Colonic mucosa (tissue), 4 donors: ENCODE measurements at regions of chr1 and their contacts with region 1.

Region 1: DNA sequence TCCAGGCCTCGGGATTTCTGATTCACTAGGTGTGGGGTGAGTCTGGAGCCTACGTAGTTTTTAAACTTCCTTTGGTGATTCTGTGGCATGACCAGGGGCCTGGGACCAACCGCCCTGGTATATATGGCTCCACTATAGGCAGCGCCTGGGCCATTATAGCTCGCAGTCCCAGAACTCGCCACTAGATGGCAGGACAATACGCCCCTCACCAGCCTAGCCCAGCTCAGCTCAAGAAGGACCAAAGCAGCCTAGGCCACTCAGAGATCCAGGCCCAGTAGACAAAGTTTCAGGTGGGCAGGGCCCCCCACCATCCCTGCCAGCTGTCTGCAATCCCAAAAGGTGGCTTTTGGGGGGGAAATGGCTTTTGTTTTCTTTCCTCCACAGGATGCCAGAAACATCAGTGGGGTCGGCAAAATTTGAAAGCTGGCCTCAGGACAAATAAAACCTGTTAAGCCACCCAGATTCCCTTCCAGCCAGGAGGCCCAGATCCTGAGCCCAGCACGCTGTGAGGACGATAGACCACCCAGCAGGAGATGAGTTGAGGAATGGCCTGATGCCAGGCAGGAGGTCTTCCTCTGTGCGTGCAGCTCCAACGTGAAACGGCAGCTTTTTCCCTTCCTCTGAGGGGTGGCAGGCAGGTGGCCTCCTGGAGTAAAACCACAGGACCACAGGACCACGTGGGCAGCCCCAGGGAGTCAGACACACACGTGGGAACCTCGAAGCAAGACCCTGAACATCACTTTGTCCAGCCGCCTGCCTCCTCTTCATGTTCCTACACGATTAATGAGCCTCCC is 24.8 kb upstream of the TMEM51 start:
- DNase-seq: peak; percentile 80
- H3K4me3 ChIP-seq: no peak overlapping the region
- H3K27ac ChIP-seq: no peak overlapping the region
- H3K4me1 ChIP-seq: no peaks in the 10 kb centered on the region
- H3K27me3 ChIP-seq: no peaks in the 10 kb centered on the region
- CTCF ChIP-seq: peak; percentile 94

Region 2: DNA sequence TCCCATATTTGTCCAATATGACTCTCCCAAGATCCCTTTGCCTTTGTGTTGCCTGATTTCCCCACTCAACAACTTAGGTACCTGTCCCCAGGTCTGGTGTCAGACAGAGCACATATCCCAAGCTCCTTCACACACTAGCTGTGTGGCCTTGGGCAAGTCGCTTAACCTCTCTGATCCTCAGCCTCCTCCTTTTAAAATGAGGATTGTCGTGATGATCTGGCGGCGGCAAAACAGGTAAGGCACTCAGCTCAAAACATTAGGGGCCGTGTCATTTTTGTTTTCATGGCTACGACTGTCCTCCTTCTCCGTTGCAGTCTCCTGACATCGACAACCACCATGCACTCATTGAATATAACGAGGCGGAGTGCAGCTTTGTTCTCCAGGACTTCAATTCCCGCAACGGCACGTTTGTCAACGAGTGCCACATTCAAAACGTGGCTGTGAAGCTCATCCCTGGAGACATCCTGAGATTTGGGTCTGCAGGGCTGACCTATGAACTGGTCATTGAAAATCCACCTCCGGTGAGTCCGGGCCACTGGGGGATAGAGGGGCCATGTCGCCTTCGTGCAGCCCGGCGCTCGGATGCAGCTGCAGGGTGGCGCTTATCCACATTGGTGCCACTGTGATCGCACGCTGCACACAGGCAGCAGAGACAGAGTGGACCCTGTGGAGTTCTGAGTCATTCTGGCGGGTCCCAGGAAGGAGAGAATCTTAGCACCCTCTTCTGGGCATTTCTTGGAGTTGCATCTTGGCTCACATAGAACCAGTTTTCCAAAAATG is 143.5 kb after region 1 on chr1:
- intact Hi-C with region 1: loop called (anchors 5 kb)
- DNase-seq: peak; percentile 81
- H3K4me3 ChIP-seq: no peak overlapping the region
- H3K27ac ChIP-seq: no peak overlapping the region
- H3K4me1 ChIP-seq: no peaks in the 10 kb centered on the region
- H3K27me3 ChIP-seq: no peaks in the 10 kb centered on the region
- CTCF ChIP-seq: peak; percentile 74

Region 3: DNA sequence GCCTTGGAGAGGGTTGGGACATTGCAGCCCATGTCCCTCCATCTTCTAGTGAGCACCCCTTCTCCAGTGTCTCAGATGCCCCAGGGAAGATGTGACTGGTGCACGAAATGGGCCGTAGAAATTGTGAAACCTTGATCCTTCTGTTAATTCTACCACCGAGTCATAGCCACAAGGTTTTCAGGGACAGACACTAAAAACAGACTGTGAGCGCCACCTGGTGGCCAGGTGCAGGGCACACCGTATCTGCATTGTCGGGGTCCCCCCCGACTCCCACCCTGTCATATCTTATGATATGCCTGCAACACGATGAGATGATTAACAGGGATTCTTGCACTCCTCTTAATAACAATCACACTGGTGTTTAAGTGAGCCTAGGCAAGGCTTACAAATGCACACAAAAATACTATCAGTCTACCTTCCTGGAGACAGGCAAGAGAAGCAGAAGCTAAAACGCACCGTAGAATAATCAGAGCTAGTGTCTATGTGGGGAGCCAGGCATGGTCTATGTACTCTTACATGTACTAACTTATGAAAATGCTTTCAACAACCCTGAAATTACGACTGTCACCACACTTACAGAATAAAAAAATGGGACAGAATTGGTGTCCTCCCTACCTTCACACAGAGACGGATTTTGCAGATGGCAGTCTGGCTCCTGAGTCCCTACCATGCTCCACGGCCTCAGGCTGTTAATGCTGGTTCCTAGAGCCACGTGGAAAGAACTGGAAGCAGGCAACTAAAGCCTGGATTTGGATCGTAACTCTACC is 176.2 kb after region 1 on chr1:
- intact Hi-C with region 1: loop called (anchors 2 kb)
- DNase-seq: peak; percentile 82
- H3K4me3 ChIP-seq: no peak overlapping the region
- H3K27ac ChIP-seq: no peak overlapping the region
- H3K4me1 ChIP-seq: no peaks in the 10 kb centered on the region
- H3K27me3 ChIP-seq: no peaks in the 10 kb centered on the region
- CTCF ChIP-seq: peak; percentile 96

Region 4: GRCh38 chr1:15430787-15431570 is 302.3 kb after region 1 on chr1:
- intact Hi-C with region 1: loop called (anchors 10 kb)
- DNase-seq: peak; percentile 86
- H3K4me3 ChIP-seq: no peak overlapping the region
- H3K27ac ChIP-seq: no peak overlapping the region
- H3K4me1 ChIP-seq: peaks cover 8% of the 10 kb centered on the region
- H3K27me3 ChIP-seq: no peaks in the 10 kb centered on the region
- CTCF ChIP-seq: peak; percentile 94